Right cardiac atrium (tissue), 5 donors: ENCODE measurements at regions of chr6 and their contacts with region 1.

Region 1: GRCh38 chr6:112180095-112180820 is 74.1 kb downstream of the LAMA4 start:
- DNase-seq: no peak
- ATAC-seq: peak; percentile 65 to 72
- H3K4me3 ChIP-seq: no peak overlapping the region
- H3K27ac ChIP-seq: no peak overlapping the region
- H3K4me1 ChIP-seq: no peaks in the 10 kb centered on the region
- H3K27me3 ChIP-seq: no peaks in the 10 kb centered on the region

Region 2: GRCh38 chr6:112117554-112117953 is 62.7 kb before region 1 on chr6:
- intact Hi-C with region 1: no loop called
- DNase-seq: no peak
- ATAC-seq: no peak
- H3K4me3 ChIP-seq: no peak overlapping the region
- H3K27ac ChIP-seq: no peak overlapping the region
- H3K4me1 ChIP-seq: peaks cover 3% of the 10 kb centered on the region
- H3K27me3 ChIP-seq: no peaks in the 10 kb centered on the region

Region 3: GRCh38 chr6:112253841-112254816 is 73.9 kb after region 1 on chr6 and contains the start of gene LAMA4:
- intact Hi-C with region 1: loop called in 1 of 4 experiments (anchors 10 kb)
- DNase-seq: peak; percentile 59 to 86 (median 85)
- ATAC-seq: peak; percentile 73 to 81
- H3K4me3 ChIP-seq: peak within 1 kb of the TSS; percentile 72
- H3K27ac ChIP-seq: peak within 1 kb of the TSS; percentile 94
- H3K4me1 ChIP-seq: peaks cover 13% of the 10 kb centered on the region
- H3K27me3 ChIP-seq: no peaks in the 10 kb centered on the region
- total RNA-seq, gene LAMA4: 32.0 to 45.8 (median 33.4) TPM

Region 4: GRCh38 chr6:112269114-112269513 is 88.9 kb after region 1 on chr6:
- intact Hi-C with region 1: loop called in 1 of 4 experiments (anchors 10 kb)
- DNase-seq: no peak
- ATAC-seq: peak; percentile 47 to 82
- H3K4me3 ChIP-seq: no peak overlapping the region
- H3K27ac ChIP-seq: peak overlapping the region; percentile 81
- H3K4me1 ChIP-seq: peaks cover 4% of the 10 kb centered on the region
- H3K27me3 ChIP-seq: no peaks in the 10 kb centered on the region

Region 5: DNA sequence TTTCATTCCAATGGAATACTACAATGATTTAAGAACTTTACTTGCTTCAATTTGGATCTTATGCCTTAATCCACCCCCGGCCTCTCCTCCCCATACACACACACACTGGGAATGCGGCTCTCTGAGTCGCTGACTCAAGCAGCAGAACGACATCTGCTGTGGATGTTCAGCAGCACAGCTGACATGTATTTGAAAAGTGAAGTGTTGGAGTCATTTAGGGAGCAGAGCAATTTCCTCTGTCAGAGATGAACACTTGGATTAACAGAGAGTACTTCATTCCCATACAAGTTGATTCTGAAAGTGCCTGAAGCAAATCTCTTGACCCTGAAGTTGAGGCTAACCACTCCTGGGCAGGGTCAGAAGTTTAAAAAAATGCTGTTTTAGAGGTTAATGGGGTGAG is 102.0 kb after region 1 on chr6:
- intact Hi-C with region 1: loop called in 1 of 4 experiments (anchors 10 kb)
- DNase-seq: peak; percentile 63 to 78 (median 65)
- ATAC-seq: peak; percentile 87 to 93
- H3K4me3 ChIP-seq: no peak overlapping the region
- H3K27ac ChIP-seq: no peak overlapping the region
- H3K4me1 ChIP-seq: peaks cover 3% of the 10 kb centered on the region
- H3K27me3 ChIP-seq: no peaks in the 10 kb centered on the region

Region 6: DNA sequence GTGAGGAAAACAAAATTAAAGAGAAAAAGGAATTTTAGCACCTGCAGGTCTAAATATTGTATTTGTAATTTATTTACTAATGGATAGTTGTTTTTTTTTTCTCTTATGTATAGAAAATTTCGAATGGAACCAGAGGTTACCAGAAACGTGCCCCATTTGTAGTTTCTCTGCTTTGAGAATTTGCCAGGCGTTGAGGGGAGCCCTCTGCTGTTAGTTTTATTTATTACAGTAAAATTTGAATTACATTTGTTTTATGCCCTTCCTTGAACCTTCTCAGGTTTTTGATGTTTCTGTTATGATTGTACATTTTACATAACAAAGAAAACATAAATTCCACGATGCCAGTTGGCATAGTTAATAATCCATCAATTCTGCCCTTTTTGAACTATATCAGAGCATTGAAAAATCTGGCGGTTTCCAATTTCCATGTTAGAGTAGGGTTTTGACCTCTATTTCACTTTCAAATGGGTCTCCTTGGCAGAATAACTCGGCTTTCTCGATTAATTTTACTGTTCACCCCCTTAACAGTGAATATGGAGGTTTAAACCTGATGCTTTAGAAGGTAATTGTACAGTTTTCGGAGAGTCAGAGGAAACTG is 131.8 kb after region 1 on chr6:
- intact Hi-C with region 1: loop called (anchors 2 to 5 kb)
- DNase-seq: no peak
- ATAC-seq: no peak
- H3K4me3 ChIP-seq: no peak overlapping the region
- H3K27ac ChIP-seq: no peak overlapping the region
- H3K4me1 ChIP-seq: peaks cover 3% of the 10 kb centered on the region
- H3K27me3 ChIP-seq: no peaks in the 10 kb centered on the region

Region 7: DNA sequence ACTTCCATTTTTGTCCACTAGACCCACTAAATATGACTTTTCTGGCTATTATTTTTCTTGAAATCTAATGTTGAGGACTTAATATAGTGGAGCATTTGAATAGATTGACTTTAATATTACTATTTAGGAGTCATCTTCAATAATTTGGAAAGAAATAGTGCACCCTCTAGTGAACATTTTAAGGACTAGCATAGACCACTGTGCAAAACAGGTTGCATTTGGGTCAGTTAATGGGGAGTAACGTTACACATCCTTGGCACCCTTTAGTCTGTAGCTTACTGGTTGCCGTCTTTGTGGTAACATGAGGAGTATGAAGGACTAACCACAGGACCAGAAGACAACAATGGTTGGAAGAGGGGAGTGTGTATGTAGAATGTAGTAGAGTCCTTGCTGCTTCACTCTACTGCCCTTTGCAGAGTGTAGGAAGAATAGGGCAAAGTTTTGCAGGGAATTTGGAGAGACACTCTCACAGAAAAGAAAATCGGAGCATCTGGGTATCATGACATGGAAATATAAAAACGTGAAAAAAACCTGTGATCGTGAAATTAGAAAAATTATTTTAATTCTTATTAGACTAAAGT is 192.1 kb after region 1 on chr6:
- intact Hi-C with region 1: loop called in 3 of 4 experiments (anchors 5 to 10 kb)
- DNase-seq: no peak
- ATAC-seq: peak; percentile 47 to 61
- H3K4me3 ChIP-seq: no peak overlapping the region
- H3K27ac ChIP-seq: no peak overlapping the region
- H3K4me1 ChIP-seq: no peaks in the 10 kb centered on the region
- H3K27me3 ChIP-seq: no peaks in the 10 kb centered on the region